ENCODE measurements at regions of chr4 and their contacts with region 1.

Region 1: DNA sequence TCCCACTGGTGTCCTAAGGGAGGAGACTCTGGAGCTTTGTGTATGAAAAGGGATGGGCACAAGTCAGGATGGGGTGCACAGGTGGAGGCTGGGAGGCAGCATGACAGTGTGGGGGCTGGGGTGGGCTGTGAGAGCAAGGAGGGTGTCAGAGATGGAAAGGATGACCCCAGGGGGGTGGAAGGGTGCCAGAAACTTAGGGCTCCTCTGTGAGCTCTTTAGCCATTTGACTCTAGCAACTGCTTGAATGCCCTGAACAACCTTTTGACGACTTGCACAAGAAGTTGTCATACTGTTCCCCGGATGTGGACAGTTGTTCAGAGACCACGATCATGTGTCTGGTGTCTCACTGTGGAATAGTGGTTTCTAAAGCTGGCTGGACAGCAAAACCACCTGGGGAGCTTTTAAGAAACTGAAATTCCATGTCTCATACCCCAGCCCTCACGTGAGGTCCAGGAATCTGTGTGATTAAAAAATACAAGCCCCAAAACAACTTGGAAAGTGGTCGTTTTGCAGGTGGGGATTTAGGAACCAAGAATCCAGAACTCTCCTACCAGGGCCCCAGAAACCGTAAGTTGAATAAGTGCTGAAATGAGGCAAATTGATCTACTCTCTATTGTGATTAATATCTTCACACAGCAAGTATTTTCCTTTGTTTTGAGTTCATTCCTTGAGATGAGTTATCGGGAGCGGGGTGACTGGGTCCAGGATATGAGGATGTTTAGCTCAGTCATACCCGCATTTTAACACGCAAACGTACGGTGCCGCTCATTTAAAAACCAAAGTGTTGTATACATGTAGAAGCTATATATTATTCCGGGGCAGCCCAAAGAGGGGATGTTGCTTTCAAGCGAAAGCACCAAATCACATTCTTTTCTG is 3.4 kb downstream of the RHOH start:
- DNase-seq: no peak
- ATAC-seq: peak; percentile 20
- H3K4me3 Mint-ChIP-seq: peak overlapping the region; percentile 97
- H3K27ac Mint-ChIP-seq: peak overlapping the region; percentile 95
- H3K4me1 Mint-ChIP-seq: peaks cover 67% of the 10 kb centered on the region
- H3K27me3 Mint-ChIP-seq: no peaks in the 10 kb centered on the region
- CTCF ChIP-seq: no peak

Region 2: DNA sequence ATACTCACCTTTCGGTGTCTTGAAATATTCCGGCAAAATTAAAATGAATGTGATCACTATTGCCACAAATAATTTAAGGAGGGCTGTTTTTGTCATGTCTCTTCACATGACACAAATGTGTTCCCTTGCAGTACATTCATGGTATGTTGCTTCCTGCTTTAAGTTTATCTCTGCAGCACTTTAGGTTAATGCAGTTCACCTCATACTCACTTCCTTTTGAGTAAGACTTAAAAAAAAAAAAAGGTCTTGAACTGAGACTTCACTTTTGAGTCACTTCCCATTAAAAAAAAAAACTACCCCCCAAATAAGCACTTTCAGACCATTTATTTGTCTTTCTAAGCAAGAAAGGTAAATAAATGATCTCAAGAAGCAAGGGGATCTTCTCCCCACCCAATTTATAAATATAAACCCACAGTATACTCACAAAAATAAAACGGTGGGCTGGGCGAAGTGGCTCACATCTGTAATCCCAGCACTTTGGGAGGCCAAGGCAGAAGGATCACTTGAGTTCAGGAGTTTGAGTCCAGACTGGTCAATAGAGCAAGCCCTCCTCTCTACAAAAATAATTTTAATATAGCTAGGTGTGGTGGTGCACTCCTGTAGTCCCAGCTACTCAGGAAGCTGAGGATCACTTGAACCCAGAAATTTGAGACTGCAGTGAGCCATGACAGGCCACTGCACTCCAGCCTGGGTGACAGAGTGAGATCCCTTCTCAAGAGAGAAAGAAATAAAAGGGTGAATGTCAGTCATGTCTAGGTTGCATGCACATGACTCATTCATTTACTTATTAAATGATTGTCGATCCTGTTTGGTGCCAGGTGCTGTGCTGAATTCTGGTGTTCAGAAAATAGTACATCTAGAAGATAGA is 1167.8 kb before region 1 on chr4 and contains the start of gene TMEM156:
- CTCF ChIA-PET with region 1: no interaction called
- POLR2A ChIA-PET with region 1: no interaction called
- intact Hi-C with region 1: loop called (anchors 10 kb)
- DNase-seq: no peak
- ATAC-seq: peak; percentile 69
- H3K4me3 Mint-ChIP-seq: peak within 1 kb of the TSS; percentile 83
- H3K27ac Mint-ChIP-seq: peak within 1 kb of the TSS; percentile 93
- H3K4me1 Mint-ChIP-seq: peaks cover 64% of the 10 kb centered on the region
- H3K27me3 Mint-ChIP-seq: no peaks in the 10 kb centered on the region
- CTCF ChIP-seq: no peak
- total RNA-seq, gene TMEM156: 26.0 and 29.5 TPM in 2 replicates

Region 3: DNA sequence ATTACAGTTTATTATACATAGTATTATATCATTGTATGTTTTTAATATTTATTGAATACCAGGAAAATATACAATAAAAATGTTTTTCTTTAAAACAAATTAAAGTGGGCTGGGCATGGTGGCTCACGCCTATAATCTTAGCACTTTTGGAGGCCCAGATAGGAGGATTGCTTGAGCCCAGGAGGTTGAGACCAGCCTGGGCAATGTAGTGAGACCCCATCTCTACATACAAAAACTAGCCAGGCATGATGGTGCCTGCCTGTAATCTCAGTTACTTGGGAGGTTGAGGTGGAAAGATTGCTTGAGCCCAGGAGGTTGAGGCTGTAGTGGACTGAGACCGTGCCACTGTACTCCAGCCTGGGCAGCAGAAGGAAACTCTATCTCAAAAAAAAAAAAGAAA is 184.2 kb before region 1 on chr4:
- CTCF ChIA-PET with region 1: no interaction called
- POLR2A ChIA-PET with region 1: no interaction called
- intact Hi-C with region 1: no loop called
- DNase-seq: no peak
- ATAC-seq: no peak
- H3K4me3 Mint-ChIP-seq: no peak overlapping the region
- H3K27ac Mint-ChIP-seq: no peak overlapping the region
- H3K4me1 Mint-ChIP-seq: no peaks in the 10 kb centered on the region
- H3K27me3 Mint-ChIP-seq: no peaks in the 10 kb centered on the region
- CTCF ChIP-seq: no peak

Region 4: GRCh38 chr4:40056716-40057585 is 143.3 kb before region 1 on chr4 and contains the start of gene N4BP2:
- CTCF ChIA-PET with region 1: interaction called, 4 read pairs
- POLR2A ChIA-PET with region 1: interaction called, 7 read pairs
- intact Hi-C with region 1: loop called (anchors 2 kb)
- DNase-seq: peak; percentile 75
- ATAC-seq: peak; percentile 68
- H3K4me3 Mint-ChIP-seq: peak within 1 kb of the TSS; percentile 95
- H3K27ac Mint-ChIP-seq: peak within 1 kb of the TSS; percentile 92
- H3K4me1 Mint-ChIP-seq: peaks cover 27% of the 10 kb centered on the region
- H3K27me3 Mint-ChIP-seq: no peaks in the 10 kb centered on the region
- CTCF ChIP-seq: no peak
- total RNA-seq, gene N4BP2: 6.0 and 6.2 TPM in 2 replicates

Region 5: DNA sequence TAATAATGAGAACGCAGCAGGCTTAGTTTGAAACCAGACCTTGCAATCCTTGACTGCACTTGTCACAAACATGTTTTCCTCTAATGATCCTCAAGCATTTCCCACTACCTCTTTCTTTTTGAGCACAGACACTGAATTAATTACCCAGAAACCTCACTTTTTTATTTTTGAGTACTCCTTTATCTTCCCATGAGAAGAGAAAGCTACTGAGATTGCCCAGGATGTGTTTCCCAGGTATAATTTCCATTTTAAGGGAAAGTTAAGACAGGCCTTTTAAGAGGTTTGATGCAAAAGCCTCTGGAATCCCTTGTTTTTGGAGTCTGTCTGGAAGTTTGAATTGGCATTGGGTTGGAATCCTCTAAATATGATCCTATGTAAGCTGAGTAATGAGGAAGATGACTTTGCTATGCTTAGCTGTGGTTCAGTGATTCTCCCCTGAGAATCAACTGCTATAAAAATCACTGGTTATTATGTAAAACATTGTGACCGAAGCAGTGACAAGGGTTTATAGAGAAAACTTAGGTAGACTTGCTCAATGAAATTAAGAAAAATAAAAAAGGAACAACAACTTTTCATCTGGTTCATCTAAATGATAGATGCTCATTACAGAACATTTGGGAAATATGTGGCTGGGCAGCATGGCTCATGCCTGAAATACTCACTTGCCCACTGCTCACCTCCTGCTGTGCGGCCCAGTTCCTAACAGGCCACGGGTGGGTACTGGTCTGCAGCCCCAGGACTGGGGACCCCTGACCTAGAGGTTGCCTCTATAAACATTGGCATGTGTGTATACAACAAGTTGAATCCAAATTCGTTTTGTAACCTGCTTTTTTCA is 14.2 kb before region 1 on chr4:
- CTCF ChIA-PET with region 1: interaction called, 25 read pairs
- POLR2A ChIA-PET with region 1: interaction called, 457 read pairs
- intact Hi-C with region 1: loop called (anchors 1 kb)
- DNase-seq: no peak
- ATAC-seq: peak; percentile 78
- H3K4me3 Mint-ChIP-seq: peak overlapping the region; percentile 80
- H3K27ac Mint-ChIP-seq: peak overlapping the region; percentile 91
- H3K4me1 Mint-ChIP-seq: peaks cover 88% of the 10 kb centered on the region
- H3K27me3 Mint-ChIP-seq: no peaks in the 10 kb centered on the region
- CTCF ChIP-seq: no peak

Region 6: GRCh38 chr4:40228497-40229365 is 28.5 kb after region 1 on chr4:
- CTCF ChIA-PET with region 1: interaction called, 4 read pairs
- POLR2A ChIA-PET with region 1: interaction called, 10 read pairs
- intact Hi-C with region 1: loop called (anchors 2 kb)
- DNase-seq: no peak
- ATAC-seq: peak; percentile 9
- H3K4me3 Mint-ChIP-seq: peak overlapping the region; percentile 25
- H3K27ac Mint-ChIP-seq: peak overlapping the region; percentile 78
- H3K4me1 Mint-ChIP-seq: peaks cover 91% of the 10 kb centered on the region
- H3K27me3 Mint-ChIP-seq: no peaks in the 10 kb centered on the region
- CTCF ChIP-seq: no peak

Region 7: DNA sequence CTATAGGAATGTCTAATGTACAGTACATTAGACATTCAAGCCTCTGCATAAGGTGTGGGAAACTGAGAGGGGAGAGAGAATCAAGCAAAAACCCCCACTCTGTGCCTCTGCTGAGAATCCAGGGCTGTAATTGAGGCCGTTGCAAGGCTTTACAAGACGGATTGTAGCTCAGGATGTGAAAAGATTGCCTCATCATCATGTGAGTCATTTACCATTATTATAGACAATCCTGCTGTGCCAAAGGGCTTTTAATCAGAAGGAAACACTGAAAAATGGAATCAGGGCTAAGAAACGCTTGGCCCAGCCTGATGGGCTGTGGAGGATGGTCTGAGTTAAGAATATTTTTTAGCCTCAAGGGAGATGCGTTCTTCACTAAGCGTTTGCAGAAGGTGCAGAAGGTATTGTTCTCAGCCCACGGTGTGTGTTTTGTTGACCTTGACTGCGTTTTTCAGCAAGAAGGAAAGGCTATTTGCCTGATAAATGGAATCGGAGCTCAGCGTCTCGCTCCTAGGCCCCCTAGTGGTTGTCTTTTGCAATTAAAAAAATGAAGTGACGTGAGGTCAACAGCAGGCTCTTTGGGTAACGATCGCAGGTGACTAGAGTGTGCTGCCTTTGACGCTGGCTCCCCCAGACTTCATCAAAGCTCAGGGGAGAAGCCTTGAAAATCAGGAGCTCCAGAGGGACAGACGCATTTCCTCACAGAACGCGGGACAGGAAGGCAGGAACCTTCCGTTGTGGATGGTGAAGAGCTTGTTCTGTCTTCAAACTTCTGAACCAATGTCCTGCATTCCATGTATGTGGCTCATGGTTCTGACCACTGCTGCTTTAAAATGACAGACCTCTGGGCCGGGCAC is 116.8 kb after region 1 on chr4:
- CTCF ChIA-PET with region 1: interaction called, 7 read pairs
- POLR2A ChIA-PET with region 1: interaction called, 187 read pairs
- intact Hi-C with region 1: no loop called
- DNase-seq: peak; percentile 38
- ATAC-seq: peak; percentile 82
- H3K4me3 Mint-ChIP-seq: peak overlapping the region; percentile 84
- H3K27ac Mint-ChIP-seq: peak overlapping the region; percentile 87
- H3K4me1 Mint-ChIP-seq: peaks cover 28% of the 10 kb centered on the region
- H3K27me3 Mint-ChIP-seq: no peaks in the 10 kb centered on the region
- CTCF ChIP-seq: peak; percentile 48